ENCODE measurements at regions of chr12 and their contacts with region 1.

Region 1: DNA sequence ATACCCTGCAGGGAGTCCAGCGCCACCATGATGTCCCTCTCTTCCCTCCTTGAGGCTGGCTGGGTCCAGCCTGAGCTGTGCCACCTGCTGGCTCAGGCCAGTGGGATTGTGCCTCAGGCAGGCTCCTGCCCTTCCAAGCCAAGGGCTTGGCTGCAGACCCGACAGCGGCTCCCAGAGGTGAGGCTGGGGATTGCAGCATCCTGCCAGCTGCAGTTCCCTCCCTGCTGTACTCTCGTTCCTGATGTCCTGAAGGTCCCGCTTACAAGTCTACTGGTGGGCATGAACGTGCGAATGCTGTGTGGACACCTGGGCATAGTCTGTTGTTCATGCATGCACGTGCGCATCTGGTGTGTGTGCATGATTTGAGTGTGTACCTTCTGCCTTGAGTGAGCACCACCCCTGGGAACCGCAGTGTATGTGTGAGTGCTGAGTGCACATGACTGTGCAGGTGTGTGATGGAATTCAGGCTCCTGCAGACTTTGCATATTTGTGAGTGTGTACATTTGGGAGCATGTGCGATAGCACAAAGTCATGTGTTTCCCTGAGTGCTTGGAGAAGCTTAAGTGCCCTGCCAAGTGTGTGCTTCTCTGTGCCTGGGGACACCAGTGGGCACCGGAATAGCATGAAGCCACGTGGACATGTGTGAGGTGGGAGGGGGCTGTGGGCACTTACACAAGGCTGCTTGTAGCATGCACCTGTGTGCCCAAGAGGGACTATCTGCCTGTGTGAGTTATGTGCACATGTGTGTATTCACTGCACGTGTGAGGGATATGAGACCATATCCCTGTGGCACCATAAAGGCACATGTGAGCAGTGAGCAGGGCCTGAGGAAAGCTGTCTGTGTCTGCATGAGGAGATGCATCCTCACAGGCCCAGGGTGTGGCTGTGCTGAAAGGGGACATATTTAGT is 19.3 kb upstream of the KRT7 start:
- DNase-seq: peak; percentile 67
- ATAC-seq: peak; percentile 75 to 84

Region 2: DNA sequence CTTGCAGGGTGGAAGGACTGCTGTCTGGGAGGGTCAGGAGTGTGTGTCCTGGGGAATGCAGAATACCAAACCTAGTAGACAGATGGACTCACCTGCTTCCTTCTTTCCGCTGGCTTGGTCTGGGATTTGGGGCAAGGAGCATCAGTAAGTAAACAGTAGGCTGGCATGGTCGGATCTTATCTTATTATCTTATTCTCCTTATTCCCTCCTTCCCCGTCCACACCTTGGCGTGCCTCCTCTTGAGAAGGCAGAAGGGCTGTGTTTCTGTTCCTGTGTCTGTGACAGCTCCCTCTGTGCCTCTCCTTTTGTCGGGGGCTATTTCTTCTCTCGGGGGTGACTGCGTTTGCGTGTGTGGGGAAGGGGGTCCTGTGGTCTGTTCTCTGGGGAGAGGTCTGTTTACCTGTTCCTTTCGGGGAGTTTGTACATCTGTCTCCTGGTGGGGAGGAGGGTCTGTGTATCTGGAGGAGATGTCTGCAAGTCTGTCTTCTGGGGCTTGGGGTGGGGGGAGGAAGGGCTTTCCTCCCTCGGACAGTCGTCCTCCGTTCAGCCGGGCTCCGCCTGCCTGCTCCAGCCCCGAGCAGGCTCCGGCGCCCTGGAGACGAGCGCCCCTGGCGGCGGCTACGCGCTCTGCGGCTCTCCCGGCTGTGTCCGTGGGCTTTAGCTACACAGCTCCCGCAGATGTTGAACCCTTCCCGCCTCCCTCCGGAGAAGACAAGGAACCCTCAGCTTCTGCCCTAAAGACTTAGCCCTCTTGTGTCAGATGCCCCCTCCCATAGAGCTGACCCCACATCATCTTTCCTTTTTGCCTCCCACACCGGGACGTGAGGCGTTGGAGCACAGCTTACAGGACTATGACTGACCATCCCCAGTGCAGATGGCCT is 65.0 kb after region 1 on chr12:
- intact Hi-C with region 1: loop called in 1 of 2 experiments (anchors 10 kb)
- DNase-seq: peak; percentile 77
- ATAC-seq: peak; percentile 89 to 94

Measured in left cardiac atrium (tissue), 4 donors.